Breast epithelium (tissue), 4 donors: ENCODE measurements at regions of chr2 and their contacts with region 1.

Region 1: DNA sequence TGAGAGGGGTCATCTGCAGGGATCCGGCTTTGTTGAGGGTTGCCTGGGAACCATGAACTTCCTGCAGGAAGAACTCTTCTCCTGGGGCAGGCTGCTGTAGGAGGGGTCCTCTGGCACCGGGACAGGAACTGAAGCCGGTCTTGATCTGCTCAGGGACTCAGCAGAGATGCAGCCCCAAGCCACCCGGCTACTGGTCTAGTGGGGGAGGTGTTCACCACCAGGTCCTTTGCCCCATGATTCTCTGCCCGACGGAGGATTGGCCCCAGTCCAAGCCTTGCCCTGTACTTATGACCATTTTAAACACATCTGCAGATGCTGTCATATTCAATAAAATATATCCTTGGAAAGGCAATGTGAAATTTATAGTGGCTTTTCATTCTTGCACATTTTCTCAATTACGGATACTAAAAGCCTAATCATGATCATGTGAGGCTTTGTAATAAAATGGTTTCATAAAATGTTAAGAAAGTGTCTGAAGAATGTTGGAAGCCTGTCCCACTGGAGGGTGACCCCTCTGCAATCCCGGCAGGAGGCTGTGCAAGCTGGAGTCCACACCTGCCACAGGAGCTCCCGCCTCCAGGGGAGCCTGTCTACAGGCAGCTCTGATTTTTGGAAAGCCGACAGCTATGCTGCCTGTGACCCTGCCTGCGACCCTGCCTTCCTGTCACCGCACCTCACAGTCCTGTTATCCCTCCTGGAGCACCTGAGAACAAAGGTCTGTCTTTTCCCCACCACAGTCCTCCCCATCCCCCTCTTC is 98.8 kb upstream of the TAF1B start:
- DNase-seq: no peak
- H3K4me3 ChIP-seq: no peak overlapping the region
- H3K27ac ChIP-seq: no peak overlapping the region
- H3K4me1 ChIP-seq: no peaks in the 10 kb centered on the region
- H3K27me3 ChIP-seq: no peaks in the 10 kb centered on the region
- CTCF ChIP-seq: no peak
- POLR2A ChIP-seq: no peak

Region 2: DNA sequence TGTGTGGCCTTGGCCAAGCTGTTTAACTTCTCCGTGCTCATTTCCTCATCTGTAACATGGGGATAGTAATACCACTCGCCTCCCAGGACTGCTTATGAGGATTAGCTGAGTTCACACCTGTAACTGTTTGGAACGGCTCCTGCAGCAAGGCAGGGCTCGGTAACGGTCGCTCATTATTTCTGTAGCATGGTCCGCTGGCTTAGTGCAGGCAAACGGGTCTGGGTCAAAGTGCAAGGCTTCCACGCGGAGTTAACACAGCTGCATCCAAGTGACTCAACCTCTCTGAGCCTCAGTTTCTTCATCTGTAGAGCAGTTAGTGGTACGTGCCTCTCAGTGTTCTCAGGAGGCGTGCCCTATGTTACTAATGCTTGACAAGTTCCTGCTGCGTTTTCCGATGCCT is 19.3 kb before region 1 on chr2:
- intact Hi-C with region 1: loop called (anchors 1 kb)
- DNase-seq: no peak
- H3K4me3 ChIP-seq: no peak overlapping the region
- H3K27ac ChIP-seq: no peak overlapping the region
- H3K4me1 ChIP-seq: no peaks in the 10 kb centered on the region
- H3K27me3 ChIP-seq: no peaks in the 10 kb centered on the region
- CTCF ChIP-seq: no peak
- POLR2A ChIP-seq: no peak

Region 3: GRCh38 chr2:9813312-9814133 is 69.1 kb after region 1 on chr2:
- intact Hi-C with region 1: no loop called
- DNase-seq: peak in 1 of 2 donors; percentile 69
- H3K4me3 ChIP-seq: peak overlapping the region in 2 of 3 donors; percentile 17 to 48
- H3K27ac ChIP-seq: no peak overlapping the region
- H3K4me1 ChIP-seq: peaks cover 3 to 7% of the 10 kb centered on the region in 2 donors
- H3K27me3 ChIP-seq: no peaks in the 10 kb centered on the region
- CTCF ChIP-seq: peak; percentile 77 to 92 (median 78)
- POLR2A ChIP-seq: no peak